ENCODE measurements at regions of chr12 and their contacts with region 1.

Region 1: GRCh38 chr12:14167005-14167628 is 185.7 kb upstream of the GRIN2B start:
- DNase-seq: peak; percentile 46
- H3K4me3 ChIP-seq: no peak overlapping the region
- H3K27ac ChIP-seq: no peak overlapping the region
- H3K4me1 ChIP-seq: no peaks in the 10 kb centered on the region
- H3K27me3 ChIP-seq: no peaks in the 10 kb centered on the region
- CTCF ChIP-seq: peak; percentile 83 to 92 (median 88)
- EP300 ChIP-seq: no peak
- POLR2A ChIP-seq: no peak

Region 2: DNA sequence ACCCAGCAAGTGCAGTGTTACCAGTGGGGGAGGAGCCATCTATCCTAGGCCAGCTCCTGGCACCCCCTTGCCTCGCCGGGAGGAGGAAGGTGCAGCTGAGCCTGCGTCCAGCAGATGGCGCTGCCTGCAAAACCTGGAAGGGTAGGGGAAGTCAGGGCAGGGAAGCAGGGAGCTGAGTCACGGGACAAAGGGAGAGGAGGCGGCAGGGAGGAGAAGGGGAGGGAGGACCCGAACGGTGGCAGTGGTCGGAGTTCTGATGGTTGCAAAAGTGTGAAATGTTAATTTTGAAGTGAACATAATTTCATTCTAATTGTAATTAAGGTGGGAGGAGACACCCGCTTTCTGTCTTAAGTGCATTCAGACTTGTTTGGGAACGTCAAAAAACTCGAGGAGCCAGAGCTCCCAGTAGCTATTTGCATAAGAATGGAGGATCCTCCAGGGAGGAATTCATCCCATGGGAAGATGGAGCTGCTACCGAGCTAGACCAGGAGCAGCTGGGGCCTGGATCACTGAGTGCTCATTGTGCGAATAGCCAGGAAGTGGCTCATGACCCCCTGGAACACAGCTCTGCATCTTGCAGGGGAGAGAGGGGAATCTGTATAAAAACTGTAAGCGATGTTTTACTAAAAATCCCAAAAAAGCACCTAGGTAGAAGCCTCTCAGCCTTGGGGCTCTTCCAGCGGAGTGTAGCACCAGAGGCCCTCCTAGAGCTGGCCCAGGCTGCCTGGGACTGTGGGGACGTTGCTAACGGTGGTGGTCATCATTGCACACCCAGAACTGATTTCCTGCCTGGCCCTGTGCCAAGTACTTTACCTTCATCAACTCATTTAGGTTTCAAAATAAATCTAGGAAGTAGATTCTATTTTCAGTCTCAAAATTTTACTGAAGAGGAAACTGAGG is 911.1 kb before region 1 on chr12:
- in situ Hi-C with region 1: loop called in 1 of 4 experiments (anchors 25 kb)
- intact Hi-C with region 1: no loop called
- DNase-seq: peak; percentile 94
- H3K4me3 ChIP-seq: peak overlapping the region in 3 of 4 donors; percentile 3 to 27 (median 10)
- H3K27ac ChIP-seq: no peak overlapping the region
- H3K4me1 ChIP-seq: peaks cover 0 to 10% (median 3%) of the 10 kb centered on the region in 4 donors
- H3K27me3 ChIP-seq: no peaks in the 10 kb centered on the region
- CTCF ChIP-seq: peak; percentile 93 to 98 (median 96)
- EP300 ChIP-seq: no peak
- POLR2A ChIP-seq: no peak

Region 3: GRCh38 chr12:13278249-13278787 is 888.8 kb before region 1 on chr12:
- in situ Hi-C with region 1: loop called in 2 of 4 experiments (anchors 10 to 25 kb)
- intact Hi-C with region 1: no loop called
- DNase-seq: peak; percentile 73
- H3K4me3 ChIP-seq: no peak overlapping the region
- H3K27ac ChIP-seq: no peak overlapping the region
- H3K4me1 ChIP-seq: peaks cover 0 to 8% (median 2%) of the 10 kb centered on the region in 4 donors
- H3K27me3 ChIP-seq: peaks cover 15% of the 10 kb centered on the region
- CTCF ChIP-seq: peak; percentile 92 to 100 (median 98)
- EP300 ChIP-seq: no peak
- POLR2A ChIP-seq: no peak

Region 4: GRCh38 chr12:13727707-13728195 is 439.4 kb before region 1 on chr12:
- in situ Hi-C with region 1: loop called in 1 of 4 experiments (anchors 25 kb)
- intact Hi-C with region 1: no loop called
- DNase-seq: no peak
- H3K4me3 ChIP-seq: no peak overlapping the region
- H3K27ac ChIP-seq: no peak overlapping the region
- H3K4me1 ChIP-seq: no peaks in the 10 kb centered on the region
- H3K27me3 ChIP-seq: no peaks in the 10 kb centered on the region
- CTCF ChIP-seq: no peak
- EP300 ChIP-seq: no peak
- POLR2A ChIP-seq: no peak

Region 5: GRCh38 chr12:13772264-13772663 is 394.9 kb before region 1 on chr12:
- in situ Hi-C with region 1: loop called in 1 of 4 experiments (anchors 25 kb)
- intact Hi-C with region 1: no loop called
- DNase-seq: no peak
- H3K4me3 ChIP-seq: no peak overlapping the region
- H3K27ac ChIP-seq: no peak overlapping the region
- H3K4me1 ChIP-seq: no peaks in the 10 kb centered on the region
- H3K27me3 ChIP-seq: no peaks in the 10 kb centered on the region
- CTCF ChIP-seq: no peak
- EP300 ChIP-seq: no peak
- POLR2A ChIP-seq: no peak

Region 6: DNA sequence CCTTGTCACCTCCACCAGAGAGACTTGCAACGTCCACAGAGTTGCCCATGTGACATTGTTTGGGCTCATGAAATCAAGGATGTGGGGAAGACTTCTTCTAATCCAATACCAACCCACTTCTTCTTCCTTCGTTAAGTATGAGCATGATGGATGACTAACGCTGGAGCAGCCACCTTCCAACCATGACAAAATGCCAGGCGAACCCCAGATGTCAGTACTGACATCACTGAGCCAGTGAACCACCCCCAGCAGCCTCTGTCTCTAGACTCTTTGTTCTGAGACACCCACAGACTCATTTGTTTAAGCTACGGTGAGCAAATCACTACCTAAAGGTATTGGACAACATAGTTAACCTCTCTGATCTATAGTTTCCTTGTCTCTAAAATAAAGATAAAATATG is 309.4 kb before region 1 on chr12:
- in situ Hi-C with region 1: loop called (anchors 10 to 25 kb)
- intact Hi-C with region 1: loop called (anchors 5 kb)
- DNase-seq: no peak
- H3K4me3 ChIP-seq: no peak overlapping the region
- H3K27ac ChIP-seq: no peak overlapping the region
- H3K4me1 ChIP-seq: no peaks in the 10 kb centered on the region
- H3K27me3 ChIP-seq: peaks cover 2% of the 10 kb centered on the region
- CTCF ChIP-seq: no peak
- EP300 ChIP-seq: no peak
- POLR2A ChIP-seq: no peak

Region 7: DNA sequence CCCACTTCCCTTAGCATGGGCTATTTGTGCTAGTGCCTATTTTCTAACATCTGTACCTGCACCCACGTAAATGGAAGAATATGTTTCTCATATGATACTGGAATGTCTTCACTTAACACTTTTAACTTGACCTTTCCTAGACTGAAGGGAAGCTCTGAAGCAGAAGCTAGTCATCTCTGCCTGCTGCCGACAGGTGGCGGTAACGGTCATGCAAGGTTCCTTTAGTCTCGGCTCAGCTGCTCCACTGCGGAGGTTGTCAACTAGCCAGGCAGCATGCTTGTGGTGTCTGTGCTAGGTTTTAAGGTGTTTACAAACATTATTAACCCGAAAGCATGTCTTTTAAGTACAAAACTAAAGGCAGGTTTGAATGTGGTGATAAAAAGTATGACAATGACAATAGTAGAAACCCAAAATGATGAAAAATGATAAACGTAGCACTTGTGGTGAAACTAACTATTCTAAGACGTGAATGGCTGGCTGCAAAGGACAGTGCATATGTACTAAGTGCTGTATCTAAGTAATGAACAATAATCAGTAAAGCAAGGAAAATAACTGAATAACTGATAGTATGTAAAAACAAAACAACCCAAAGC is 302.9 kb before region 1 on chr12:
- in situ Hi-C with region 1: loop called (anchors 10 to 25 kb)
- intact Hi-C with region 1: loop called (anchors 5 kb)
- DNase-seq: peak; percentile 82
- H3K4me3 ChIP-seq: no peak overlapping the region
- H3K27ac ChIP-seq: no peak overlapping the region
- H3K4me1 ChIP-seq: no peaks in the 10 kb centered on the region
- H3K27me3 ChIP-seq: peaks cover 6% of the 10 kb centered on the region
- CTCF ChIP-seq: peak; percentile 81 to 87 (median 84)
- EP300 ChIP-seq: no peak
- POLR2A ChIP-seq: no peak

Region 8: DNA sequence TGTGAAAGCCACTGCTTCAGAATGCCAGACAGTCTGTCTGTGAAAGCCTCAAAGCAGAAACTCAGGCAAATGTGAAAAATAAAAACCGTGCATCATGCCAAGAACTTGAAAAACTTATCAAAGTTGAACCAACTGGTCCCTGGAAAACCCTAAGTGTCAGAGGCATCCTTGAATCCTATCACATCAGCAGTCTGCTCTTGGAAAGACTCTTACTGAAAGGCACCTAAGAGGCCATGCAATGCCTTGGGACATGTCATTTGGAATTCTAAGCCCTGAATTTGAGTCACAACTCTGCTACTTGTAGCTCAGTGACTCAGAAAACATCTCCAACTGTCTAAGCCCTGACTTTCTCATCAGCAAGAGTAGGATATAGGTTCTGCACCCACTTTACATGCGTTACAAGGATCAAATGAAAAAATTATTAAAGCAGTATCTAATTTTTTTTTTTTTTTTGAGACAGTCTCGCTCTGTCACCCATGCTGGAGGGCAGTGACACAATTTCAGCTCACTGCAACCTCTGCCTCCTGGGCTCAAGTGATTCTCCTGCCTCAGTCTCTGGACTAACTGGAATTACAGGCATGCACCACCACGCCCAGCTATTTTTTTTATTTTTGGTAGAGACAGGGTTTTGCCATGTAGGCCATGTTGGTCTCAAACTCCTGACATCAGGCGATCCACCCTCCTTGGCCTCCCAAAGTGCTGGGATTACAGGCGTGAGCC is 123.1 kb before region 1 on chr12:
- in situ Hi-C with region 1: no loop called
- intact Hi-C with region 1: no loop called
- DNase-seq: no peak
- H3K4me3 ChIP-seq: no peak overlapping the region
- H3K27ac ChIP-seq: no peak overlapping the region
- H3K4me1 ChIP-seq: no peaks in the 10 kb centered on the region
- H3K27me3 ChIP-seq: no peaks in the 10 kb centered on the region
- CTCF ChIP-seq: no peak
- EP300 ChIP-seq: no peak
- POLR2A ChIP-seq: no peak